Gastrocnemius medialis (tissue), 4 donors: ENCODE measurements at regions of chr9 and their contacts with region 1.

Region 1: DNA sequence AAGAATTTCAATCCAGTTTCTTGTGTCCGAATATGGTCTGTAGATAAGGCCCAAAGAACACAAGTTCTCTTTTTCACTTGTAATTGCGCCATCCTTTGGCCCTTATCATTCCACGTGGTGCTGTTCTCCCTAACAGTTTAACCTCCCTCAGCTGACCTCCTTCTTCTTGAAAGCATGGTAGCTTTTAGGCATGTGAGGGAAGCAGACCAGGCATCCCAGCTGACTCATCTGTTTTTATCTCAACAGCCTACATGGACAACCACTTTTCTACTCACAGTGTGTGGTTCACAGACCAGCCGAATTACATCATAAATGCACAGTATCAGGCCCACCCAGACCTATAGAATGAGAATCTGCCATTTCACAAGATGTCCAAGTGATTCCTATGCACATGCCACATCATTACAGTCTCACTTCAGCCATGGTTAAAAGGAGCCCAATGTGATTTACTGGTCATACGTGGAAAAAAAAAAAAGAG is 26.9 kb upstream of the PLIN2 start:
- DNase-seq: peak in 1 of 2 donors; percentile 30
- ATAC-seq: peak; percentile 30 to 57
- H3K4me3 ChIP-seq: no peak overlapping the region
- H3K27ac ChIP-seq: peak overlapping the region in 1 of 4 donors; percentile 4
- H3K4me1 ChIP-seq: peaks cover 0 to 5% of the 10 kb centered on the region in 2 donors
- H3K27me3 ChIP-seq: no peaks in the 10 kb centered on the region
- CTCF ChIP-seq: no peak
- POLR2A ChIP-seq: no peak

Region 2: DNA sequence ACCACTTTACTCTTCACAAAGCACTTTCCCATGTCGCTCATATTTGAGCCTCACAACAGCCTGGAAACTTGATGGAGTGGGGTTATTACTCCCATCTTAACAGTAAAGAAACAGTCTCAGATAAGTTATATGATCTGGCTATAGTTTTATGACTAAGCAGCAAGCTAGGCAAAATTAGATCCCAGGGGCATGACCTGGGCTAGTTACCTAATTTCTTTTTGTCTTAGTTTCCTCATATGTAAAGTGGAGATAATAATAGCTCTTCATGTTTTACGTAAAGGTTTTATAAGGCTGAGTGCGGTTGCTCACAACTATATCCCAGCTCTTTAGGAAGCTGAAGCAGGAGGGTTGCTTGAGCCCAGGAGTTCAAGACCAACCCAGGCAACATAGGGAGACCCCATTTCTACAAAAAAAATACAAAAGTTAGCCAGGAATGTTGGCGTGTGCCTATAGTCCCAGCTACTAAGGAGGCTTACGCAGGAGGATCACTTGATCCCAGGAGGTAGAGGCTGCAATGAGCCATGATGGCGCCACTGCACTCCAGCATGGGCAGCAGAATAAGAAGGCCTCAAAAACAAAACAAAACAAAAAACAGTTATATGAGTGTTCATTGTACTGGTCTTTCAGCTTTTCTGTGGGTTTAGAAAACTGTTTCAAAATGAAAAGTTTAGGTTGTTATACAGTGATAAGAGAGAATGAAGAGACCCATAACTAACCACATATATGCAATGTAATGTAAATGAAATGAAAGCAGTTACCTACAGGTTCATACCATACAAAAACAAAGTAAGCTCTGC is 20.4 kb before region 1 on chr9:
- in situ Hi-C with region 1: no loop called
- intact Hi-C with region 1: loop called (anchors 2 kb)
- DNase-seq: no peak
- ATAC-seq: no peak
- H3K4me3 ChIP-seq: no peak overlapping the region
- H3K27ac ChIP-seq: no peak overlapping the region
- H3K4me1 ChIP-seq: peaks cover 0 to 8% of the 10 kb centered on the region in 2 donors
- H3K27me3 ChIP-seq: no peaks in the 10 kb centered on the region
- CTCF ChIP-seq: no peak
- POLR2A ChIP-seq: no peak